ENCODE measurements at regions of chr22 and their contacts with region 1.

Region 1: GRCh38 chr22:41448189-41448808 is 1.7 kb upstream of the TOB2 start:
- DNase-seq: peak; percentile 81
- ATAC-seq: peak; percentile 65
- H3K4me3 Mint-ChIP-seq: peak overlapping the region; percentile 84
- H3K27ac Mint-ChIP-seq: peak overlapping the region; percentile 91
- H3K4me1 Mint-ChIP-seq: peaks cover 13% of the 10 kb centered on the region
- H3K27me3 Mint-ChIP-seq: no peaks in the 10 kb centered on the region

Region 2: DNA sequence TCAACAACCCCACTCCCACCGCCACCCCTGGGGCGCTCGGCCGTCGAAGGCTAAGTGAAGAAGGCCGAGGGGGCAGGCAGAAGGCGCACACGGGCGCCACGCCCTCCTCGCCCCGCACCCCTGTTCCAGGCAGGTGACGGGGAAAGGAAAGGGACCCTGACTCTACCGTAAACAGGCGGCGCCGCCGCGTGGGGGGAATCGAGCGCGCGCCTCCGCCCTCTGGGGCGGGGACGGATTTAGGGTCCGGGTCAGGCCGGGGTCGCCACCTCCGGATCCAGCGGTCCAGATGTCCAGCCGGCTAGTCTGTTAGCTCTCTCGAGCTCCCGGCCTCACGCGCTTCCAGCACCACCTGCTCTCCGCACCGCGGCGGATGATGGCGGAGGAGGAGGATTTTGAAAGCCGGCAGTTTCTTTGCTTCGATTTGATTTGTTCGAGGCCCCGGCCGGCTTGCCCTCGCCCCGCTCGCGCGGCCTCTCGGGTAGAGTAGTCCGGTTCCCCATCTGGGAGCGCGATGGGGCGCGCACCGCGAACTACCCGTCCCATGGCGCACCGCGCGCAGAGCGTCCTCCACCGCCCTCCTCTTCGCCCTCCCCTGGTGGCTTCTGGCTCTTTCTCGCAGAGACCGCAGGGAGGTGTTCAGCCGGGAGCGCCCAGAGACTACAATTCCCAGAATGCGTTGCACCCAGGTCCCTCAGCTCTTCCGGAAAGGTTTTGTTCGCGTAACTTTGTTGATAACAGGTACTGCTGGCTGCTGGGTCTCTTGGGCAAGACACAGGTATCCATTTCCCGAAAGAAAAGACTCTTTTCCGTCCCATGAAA is 162.3 kb before region 1 on chr22 and contains the start of gene RANGAP1:
- POLR2A ChIA-PET with region 1: interaction called, 16 read pairs
- DNase-seq: peak; percentile 96
- ATAC-seq: peak; percentile 96
- H3K4me3 Mint-ChIP-seq: peak within 1 kb of the TSS; percentile 95
- H3K27ac Mint-ChIP-seq: peak within 1 kb of the TSS; percentile 96
- H3K4me1 Mint-ChIP-seq: peaks cover 18% of the 10 kb centered on the region
- H3K27me3 Mint-ChIP-seq: no peaks in the 10 kb centered on the region
- total RNA-seq, gene RANGAP1: 93.6 to 98.3 TPM

Region 3: DNA sequence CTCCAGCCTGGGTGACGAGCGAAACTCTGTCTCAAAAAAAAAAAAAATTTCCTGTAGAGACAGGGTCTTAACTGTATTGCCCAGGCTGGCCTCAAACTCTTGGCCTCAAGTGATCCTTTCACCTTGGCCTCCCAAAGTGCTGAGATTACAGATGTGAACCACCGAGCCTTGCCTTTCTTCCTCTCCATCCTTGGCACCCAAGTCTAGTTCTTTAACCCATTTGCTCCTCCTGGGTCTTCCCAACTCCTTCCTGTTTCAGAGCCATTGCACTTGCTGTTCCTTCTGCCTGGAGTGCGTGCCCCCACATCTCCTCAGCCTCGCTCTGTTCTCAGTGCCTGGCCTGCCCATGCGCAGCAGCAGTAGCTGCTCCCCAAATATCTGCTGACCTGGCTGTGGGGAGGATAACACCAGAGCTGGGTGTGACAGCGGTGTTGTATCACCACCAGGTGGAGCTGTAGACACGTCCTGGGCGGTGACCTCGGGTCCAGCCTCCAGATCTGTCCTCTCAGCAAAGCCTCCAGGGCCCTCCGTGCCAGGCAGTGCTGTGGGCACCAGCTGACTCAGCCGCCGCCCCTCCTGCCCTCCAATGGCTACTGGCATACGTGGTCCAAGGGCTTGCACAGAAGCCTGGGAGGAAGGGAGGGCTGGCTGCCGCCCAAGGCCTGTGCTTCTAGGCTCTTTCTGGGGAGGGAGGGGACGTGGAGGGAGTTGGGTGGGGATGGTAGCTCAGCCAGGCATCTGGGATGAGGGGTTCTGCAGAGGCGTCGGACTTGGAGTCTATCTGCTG is 44.6 kb before region 1 on chr22:
- POLR2A ChIA-PET with region 1: interaction called, 15 read pairs
- DNase-seq: peak; percentile 81
- ATAC-seq: peak; percentile 99
- H3K4me3 Mint-ChIP-seq: peak overlapping the region; percentile 49
- H3K27ac Mint-ChIP-seq: peak overlapping the region; percentile 70
- H3K4me1 Mint-ChIP-seq: peaks cover 5% of the 10 kb centered on the region
- H3K27me3 Mint-ChIP-seq: no peaks in the 10 kb centered on the region

Region 4: DNA sequence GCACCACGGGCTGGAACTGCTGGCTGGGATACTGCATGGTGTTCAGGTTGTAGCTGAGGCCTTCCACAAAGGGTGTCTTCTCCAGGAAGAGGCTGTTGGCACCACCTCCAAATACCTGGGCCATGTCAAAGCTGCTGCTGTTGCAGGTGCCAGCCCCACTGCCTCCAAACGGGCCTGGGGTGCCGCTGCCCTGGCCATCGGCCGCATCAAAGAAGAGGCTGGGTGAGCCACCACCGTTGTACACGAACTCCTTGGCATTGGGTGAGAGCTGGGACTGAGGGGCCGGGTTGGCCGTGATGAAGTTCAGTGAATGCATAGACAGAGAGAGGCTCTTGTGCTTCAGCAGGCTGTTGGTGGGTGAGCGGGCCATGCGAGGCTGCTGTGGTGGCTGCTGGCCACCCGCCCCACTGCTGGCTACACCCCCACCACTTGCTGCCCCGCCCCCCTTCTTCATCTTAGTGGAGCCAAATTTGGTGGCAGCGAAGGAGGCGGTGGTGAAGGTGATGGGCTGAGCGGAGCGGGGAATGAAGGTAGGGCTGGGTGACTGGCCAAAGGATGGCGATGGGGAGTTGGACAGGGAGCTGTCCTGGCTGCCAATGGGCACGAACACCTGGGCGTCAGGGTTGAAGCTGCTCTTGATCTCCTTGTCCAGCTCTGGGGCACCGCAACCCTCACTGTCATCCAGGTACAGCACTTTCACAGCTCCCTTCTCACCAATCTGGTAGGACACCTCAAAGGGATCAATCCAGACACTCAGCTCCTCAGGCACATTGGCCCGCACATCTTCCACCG is 11.8 kb before region 1 on chr22:
- POLR2A ChIA-PET with region 1: interaction called, 18 read pairs
- DNase-seq: no peak
- ATAC-seq: no peak
- H3K4me3 Mint-ChIP-seq: no peak overlapping the region
- H3K27ac Mint-ChIP-seq: no peak overlapping the region
- H3K4me1 Mint-ChIP-seq: peaks cover 5% of the 10 kb centered on the region
- H3K27me3 Mint-ChIP-seq: no peaks in the 10 kb centered on the region

Region 5: GRCh38 chr22:41574847-41575381 is 126.6 kb after region 1 on chr22:
- POLR2A ChIA-PET with region 1: no interaction called
- DNase-seq: no peak
- ATAC-seq: no peak
- H3K4me3 Mint-ChIP-seq: no peak overlapping the region
- H3K27ac Mint-ChIP-seq: no peak overlapping the region
- H3K4me1 Mint-ChIP-seq: no peaks in the 10 kb centered on the region
- H3K27me3 Mint-ChIP-seq: peaks cover 3% of the 10 kb centered on the region

Region 6: DNA sequence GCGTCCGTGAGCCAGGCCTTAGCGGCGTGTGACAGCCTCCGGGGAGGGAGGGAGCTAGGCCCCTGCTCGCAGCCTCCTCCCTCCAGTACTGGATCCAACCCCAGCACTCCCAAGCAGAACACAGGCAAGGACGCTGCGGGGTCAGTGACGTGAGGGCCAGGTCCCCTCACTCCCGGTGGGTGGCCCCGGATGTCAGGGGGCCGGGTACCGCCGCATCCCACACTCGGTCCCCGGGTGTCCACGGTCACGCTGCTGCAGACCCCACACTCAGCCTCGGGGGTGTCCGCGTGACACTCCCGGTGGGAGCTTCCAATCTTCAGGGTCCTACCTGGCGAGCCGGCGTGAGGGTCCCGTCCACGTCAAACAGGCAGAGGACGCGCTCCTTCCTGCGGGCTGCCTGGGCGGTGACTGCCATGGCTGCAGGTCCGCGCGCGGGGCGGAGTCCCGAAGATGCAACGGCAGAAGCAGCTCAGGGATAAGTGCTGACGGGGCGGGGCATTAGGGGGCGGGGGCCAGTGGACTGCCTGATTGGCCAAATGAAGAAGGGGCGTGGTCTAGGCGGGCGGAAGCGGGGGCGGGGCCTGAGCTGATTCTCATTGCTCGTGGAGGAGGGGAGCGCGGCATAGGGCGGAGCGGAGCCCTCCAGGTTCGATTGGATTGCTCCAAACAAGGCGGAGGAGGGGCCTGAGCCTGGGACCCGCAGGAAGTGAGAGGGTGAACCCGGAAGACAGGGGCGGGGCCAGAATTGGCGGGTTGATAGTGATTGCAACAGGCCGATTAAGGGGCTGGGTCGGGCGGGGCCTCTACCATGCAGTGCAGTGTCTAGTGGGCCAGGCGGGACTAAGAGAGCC is 141.3 kb after region 1 on chr22 and contains the start of gene PMM1:
- POLR2A ChIA-PET with region 1: interaction called, 14 read pairs
- DNase-seq: peak; percentile 98
- ATAC-seq: peak; percentile 95
- H3K4me3 Mint-ChIP-seq: peak within 1 kb of the TSS; percentile 92
- H3K27ac Mint-ChIP-seq: peak within 1 kb of the TSS; percentile 92
- H3K4me1 Mint-ChIP-seq: peaks cover 9% of the 10 kb centered on the region
- H3K27me3 Mint-ChIP-seq: no peaks in the 10 kb centered on the region
- total RNA-seq, gene PMM1: 39.0 to 42.9 TPM